ENCODE measurements at regions of chr22 and their contacts with region 1.

Region 1: DNA sequence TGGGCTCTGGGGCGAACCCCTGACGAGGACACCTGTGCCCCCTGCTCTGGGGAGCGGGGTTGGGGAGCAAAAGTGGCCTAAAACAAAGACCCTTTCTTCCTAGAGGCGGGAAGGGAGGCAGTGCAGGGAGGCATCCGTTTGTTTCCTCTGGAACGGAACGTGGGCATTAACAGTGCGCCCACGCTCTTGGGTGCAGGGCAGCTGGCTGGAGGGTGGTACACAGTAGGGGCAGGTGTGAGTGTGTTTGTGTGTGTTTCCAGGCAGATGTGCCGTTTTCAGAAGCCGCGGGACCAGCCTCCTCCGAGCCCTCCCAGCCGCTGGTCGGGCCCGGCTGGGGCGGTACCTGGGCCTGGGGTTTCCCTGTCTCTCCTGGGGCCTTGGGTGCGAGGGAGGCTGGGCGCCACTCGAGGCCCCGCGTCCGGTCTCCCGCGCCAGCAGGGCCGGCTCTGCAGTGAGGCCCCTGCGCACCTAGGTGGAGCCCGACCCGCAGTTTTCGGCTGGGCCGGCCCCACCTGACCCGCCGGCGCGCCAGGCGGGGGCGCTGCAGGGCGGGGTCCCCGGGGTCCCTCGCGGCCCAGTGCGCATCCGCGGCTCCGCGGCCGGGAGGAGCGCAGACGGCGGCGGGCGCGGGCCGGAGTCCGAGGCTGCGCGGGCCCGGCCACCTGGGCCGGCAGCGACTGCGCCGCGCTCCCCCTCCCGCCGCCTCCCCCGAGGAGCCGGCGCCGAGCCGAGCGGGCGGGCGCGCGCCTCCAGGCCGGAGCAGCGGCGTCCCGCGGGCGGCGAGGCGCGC is 1252.7 kb downstream of the BRD1 start:
- ATAC-seq: peak in 4 of 8 experiments; percentile 76 to 95 (median 81)
- H3K4me3 ChIP-seq: peak overlapping the region in 3 of 5 donors; percentile 28 to 66 (median 47)
- H3K27ac ChIP-seq: no peak overlapping the region
- H3K4me1 ChIP-seq: no peaks in the 10 kb centered on the region

Region 2: DNA sequence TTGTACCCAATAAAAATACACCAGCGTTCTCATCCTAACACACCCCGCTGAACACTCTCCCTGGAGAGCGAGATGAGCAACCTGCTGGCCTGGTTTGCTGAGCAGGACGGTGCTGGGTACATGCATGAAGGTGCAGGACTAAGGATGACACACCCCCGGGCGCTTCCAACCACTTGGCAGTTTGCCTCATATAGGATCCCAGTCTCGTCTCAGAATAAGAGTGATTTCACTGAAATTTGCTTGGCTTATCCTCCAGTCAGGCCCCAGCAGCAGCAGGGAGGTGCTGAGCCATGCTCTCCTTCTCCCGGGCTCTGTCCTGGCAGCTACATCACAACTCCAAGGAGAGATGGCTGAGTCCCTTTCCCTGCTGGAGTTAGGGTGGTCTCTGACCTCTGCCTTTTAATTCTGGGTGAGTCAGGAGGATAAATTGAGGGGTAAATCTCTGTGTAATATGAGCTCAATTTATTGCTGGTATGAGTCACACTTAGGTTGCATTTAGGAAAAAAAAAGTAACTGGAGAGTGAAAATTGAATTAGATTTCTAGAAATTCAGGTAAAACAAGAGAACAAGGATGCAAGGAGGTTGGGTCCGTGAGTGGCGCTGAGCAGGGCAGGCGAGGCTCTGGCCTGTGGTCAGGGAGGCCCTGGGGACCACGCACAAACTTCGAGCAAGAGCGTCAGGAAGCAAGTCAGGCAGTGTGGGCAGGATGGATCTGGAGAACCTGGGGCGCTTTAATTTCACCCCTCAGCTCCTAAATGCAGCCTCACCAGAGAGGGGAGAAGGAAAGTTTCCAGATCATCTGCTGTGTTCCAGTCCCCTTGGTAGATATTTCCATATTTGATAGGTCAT is 838.6 kb before region 1 on chr22:
- in situ Hi-C with region 1: no loop called
- ATAC-seq: peak in 1 of 8 experiments; percentile 93
- H3K4me3 ChIP-seq: no peak overlapping the region
- H3K27ac ChIP-seq: no peak overlapping the region
- H3K4me1 ChIP-seq: no peaks in the 10 kb centered on the region

Region 3: DNA sequence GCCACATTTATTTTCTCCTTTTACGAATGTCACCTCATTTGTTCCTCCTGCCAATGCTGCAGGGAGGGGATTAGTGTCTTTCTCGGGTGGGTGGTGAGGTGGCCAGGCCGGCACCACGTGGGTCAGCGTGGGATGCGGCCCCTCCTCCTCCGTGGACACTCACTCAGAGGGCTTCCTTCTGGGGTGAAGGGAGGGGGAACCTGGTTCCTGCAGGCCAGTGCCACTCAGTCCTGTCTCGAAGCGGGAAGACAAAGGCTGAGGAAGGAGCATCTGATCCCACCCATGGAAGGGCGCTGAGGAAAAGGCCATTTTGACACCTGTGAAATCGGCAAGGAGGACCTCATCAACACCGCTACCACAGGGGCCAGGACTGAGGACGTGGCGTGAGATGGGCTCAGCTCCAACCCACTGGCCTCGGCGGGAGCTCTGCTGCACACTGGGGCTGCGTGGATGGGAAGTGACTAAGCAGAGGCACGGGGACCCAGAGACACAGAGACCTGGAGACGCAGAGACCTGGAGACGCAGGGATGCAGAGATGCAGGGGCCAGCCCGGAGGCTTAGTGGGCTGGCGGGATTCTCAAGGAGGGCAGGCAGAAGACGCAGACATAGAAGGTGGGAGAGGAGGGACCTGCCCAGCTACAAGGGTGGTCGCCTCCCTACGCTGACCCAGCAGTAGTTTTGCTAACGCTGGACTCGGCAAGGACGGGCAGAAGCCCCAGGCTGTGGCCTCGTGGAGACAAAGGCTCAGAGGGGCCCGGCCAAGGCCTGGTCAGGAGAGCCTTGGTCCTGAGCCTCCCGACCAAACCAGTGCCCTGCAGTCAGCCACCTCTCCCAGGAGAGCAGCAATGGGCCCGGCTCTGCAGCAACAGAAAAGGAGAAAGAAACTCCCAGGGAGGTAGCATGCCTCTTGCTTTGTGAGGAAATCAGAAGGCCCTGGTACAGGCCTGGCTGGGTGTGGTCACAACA is 181.5 kb after region 1 on chr22:
- in situ Hi-C with region 1: no loop called
- ATAC-seq: peak in 1 of 8 experiments; percentile 39
- H3K4me3 ChIP-seq: no peak overlapping the region
- H3K27ac ChIP-seq: no peak overlapping the region
- H3K4me1 ChIP-seq: no peaks in the 10 kb centered on the region

Region 4: GRCh38 chr22:49305214-49305909 is 730.4 kb after region 1 on chr22:
- in situ Hi-C with region 1: loop called in 1 of 9 experiments (anchors 25 kb)
- ATAC-seq: peak in 7 of 8 experiments; percentile 22 to 99 (median 92)
- H3K4me3 ChIP-seq: peak overlapping the region in 1 of 5 donors; percentile 3
- H3K27ac ChIP-seq: no peak overlapping the region
- H3K4me1 ChIP-seq: no peaks in the 10 kb centered on the region

Measured in motor neuron (in vitro differentiated cells).